Ovary (tissue), 10 donors: ENCODE measurements at regions of chr7 and their contacts with region 1.

Region 1: GRCh38 chr7:139651308-139651707 is 126.5 kb downstream of the HIPK2 start:
- DNase-seq: no peak
- H3K4me3 ChIP-seq: no peak overlapping the region
- H3K27ac ChIP-seq: no peak overlapping the region
- H3K4me1 ChIP-seq: peaks cover 5% of the 10 kb centered on the region
- H3K27me3 ChIP-seq: no peaks in the 10 kb centered on the region
- CTCF ChIP-seq: no peak
- EP300 ChIP-seq: no peak
- POLR2A ChIP-seq: no peak

Region 2: GRCh38 chr7:139679731-139680594 is 28.7 kb after region 1 on chr7:
- intact Hi-C with region 1: loop called in 1 of 4 experiments (anchors 1 kb)
- DNase-seq: no peak
- H3K4me3 ChIP-seq: no peak overlapping the region
- H3K27ac ChIP-seq: peak overlapping the region in 1 of 2 donors; percentile 4
- H3K4me1 ChIP-seq: peaks cover 10% of the 10 kb centered on the region
- H3K27me3 ChIP-seq: no peaks in the 10 kb centered on the region
- CTCF ChIP-seq: no peak
- EP300 ChIP-seq: no peak
- POLR2A ChIP-seq: no peak

Region 3: GRCh38 chr7:139739863-139740597 is 88.7 kb after region 1 on chr7:
- intact Hi-C with region 1: loop called in 1 of 4 experiments (anchors 10 kb)
- DNase-seq: no peak
- H3K4me3 ChIP-seq: no peak overlapping the region
- H3K27ac ChIP-seq: no peak overlapping the region
- H3K4me1 ChIP-seq: peaks cover 11% of the 10 kb centered on the region
- H3K27me3 ChIP-seq: no peaks in the 10 kb centered on the region
- CTCF ChIP-seq: no peak
- EP300 ChIP-seq: no peak
- POLR2A ChIP-seq: no peak

Region 4: DNA sequence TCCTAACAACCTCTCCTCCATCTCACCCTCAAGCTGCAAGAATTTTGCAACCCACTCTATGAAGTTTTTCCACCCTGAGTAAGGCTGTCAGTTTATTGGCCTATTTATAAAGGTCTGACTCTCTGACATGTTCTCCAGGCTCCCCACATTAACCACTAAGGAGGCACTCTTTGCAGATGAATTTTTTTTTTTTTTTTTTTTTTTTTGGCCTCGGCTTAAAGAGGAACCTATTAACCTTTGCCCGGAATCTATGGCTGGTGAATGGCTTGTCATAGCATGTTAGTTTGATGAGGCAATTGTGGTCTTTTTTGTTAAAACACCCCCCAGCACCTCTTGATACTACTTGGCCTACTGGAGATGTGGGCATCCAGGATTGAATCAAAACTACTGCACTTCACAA is 234.9 kb after region 1 on chr7:
- intact Hi-C with region 1: no loop called
- DNase-seq: no peak
- H3K4me3 ChIP-seq: no peak overlapping the region
- H3K27ac ChIP-seq: no peak overlapping the region
- H3K4me1 ChIP-seq: no peaks in the 10 kb centered on the region
- H3K27me3 ChIP-seq: no peaks in the 10 kb centered on the region
- CTCF ChIP-seq: no peak
- EP300 ChIP-seq: no peak
- POLR2A ChIP-seq: no peak